PC-9 (cell line): ENCODE measurements at regions of chr7 and their contacts with region 1.

Region 1: DNA sequence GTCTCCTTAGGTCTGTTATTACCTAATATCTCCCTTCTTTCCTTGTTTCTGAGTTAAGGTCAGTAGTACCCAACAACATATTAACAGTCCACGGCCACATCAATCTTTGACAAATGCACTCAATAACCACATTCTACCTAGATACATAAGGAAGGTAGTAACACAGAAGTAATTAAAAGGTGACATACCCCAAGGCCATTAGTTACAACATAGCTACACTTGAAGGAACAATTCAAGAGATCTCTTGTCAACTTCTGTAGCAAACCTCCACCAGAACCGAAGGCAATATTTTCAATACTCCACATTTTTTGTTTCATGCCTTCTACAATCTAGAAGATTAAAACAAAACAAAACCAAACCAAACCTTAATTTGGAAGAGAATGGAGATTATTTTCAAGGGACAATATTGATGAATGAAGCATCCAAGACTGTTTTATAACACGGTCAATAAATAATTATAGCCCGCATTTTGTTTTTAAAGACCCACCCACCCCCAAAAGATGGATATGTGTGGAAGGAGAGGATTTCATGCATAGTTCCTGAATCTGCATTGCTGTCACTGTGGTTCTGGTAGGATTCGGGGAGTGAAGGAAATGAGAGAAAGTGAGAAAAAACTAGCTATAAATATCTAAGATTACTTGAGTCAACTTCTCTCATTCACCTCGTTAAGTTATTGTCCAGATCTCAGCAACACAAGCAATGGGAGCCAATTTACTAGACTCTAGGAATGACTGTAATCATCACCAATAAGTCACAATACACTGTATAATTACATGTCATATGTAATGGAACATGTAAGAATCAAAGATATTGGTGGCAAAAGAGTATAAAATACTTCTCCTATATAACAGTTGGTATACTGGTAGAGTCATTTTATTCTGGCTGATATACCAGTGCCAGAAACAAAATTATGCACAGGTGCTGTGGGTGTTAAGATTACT is 30.3 kb downstream of the NAMPT start:
- DNase-seq: no peak
- H3K4me3 ChIP-seq: no peak overlapping the region
- H3K27ac ChIP-seq: 0 out of 2 replicates have a peak overlapping the region, but pooled peaks have one; percentile 0
- H3K4me1 ChIP-seq: no peaks in the 10 kb centered on the region
- H3K27me3 ChIP-seq: no peaks in the 10 kb centered on the region
- CTCF ChIP-seq: no peak

Region 2: DNA sequence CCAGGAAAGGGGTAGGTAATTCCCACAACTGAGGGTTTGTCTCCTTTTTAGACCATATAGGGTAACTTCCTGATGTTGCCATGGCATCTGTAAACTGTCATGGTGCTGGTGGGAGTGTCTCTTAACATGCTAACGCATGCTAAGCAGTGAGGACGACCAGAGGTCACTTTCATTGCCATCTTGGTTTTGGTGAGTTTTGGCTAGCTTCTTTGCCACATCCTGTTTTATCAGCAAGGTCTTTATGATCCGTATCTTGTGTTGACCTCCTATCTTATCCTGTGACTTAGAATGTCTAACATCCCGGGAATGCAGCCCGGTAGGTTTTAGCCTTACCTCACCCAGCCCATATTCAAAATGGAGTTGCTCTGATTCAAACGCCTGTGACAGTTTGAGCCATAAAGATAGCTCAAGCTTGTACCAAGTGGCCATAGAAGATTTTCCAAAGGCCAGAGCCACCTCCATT is 206.4 kb after region 1 on chr7:
- CTCF ChIA-PET with region 1: no interaction called
- POLR2A ChIA-PET with region 1: no interaction called
- intact Hi-C with region 1: no loop called
- DNase-seq: peak; percentile 78 to 89
- H3K4me3 ChIP-seq: no peak overlapping the region
- H3K27ac ChIP-seq: peak overlapping the region; percentile 88
- H3K4me1 ChIP-seq: peaks cover 53% of the 10 kb centered on the region
- H3K27me3 ChIP-seq: no peaks in the 10 kb centered on the region
- CTCF ChIP-seq: no peak

Region 3: GRCh38 chr7:107924841-107925504 is 1670.5 kb after region 1 on chr7:
- CTCF ChIA-PET with region 1: no interaction called
- POLR2A ChIA-PET with region 1: no interaction called
- intact Hi-C with region 1: loop called (anchors 5 kb)
- DNase-seq: no peak
- H3K4me3 ChIP-seq: no peak overlapping the region
- H3K27ac ChIP-seq: peak overlapping the region; percentile 14; the same call in 1 of the 2 replicates
- H3K4me1 ChIP-seq: no peaks in the 10 kb centered on the region
- H3K27me3 ChIP-seq: no peaks in the 10 kb centered on the region
- CTCF ChIP-seq: no peak